ENCODE measurements at regions of chr20 and their contacts with region 1.

Region 1: DNA sequence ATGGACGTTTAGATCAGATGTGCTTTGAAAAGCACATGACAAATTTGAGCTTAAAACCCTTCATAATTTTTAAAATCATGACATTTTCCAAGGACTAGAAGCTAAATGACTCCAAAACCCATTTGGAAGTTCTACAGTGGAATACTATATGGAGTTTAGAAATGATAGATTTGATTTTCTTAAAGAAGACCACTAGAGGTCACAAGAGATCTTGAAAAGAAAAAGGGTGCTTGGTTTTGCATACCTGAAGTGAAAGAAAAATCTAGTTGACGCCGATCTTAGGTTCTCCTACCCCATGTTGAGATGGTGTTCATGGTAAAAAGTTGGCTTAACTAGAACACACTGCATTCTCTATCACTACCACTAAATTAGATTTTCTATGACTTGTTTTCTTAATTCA is 31.5 kb downstream of the CFAP61 start:
- DNase-seq: peak; percentile 18
- ATAC-seq: peak; percentile 84
- H3K4me3 ChIP-seq: no peak overlapping the region
- H3K27ac ChIP-seq: no peak overlapping the region
- H3K4me1 ChIP-seq: no peaks in the 10 kb centered on the region; the same call in 1 of the 2 replicates
- H3K27me3 ChIP-seq: peaks cover 11% of the 10 kb centered on the region
- CTCF ChIP-seq: peak; percentile 63; the same call in 1 of the 2 replicates

Region 2: GRCh38 chr20:19964289-19965263 is 119.2 kb before region 1 on chr20:
- CTCF ChIA-PET with region 1: no interaction called
- POLR2A ChIA-PET with region 1: no interaction called
- in situ Hi-C with region 1: no loop called
- intact Hi-C with region 1: no loop called
- DNase-seq: no peak
- ATAC-seq: peak; percentile 90
- H3K4me3 ChIP-seq: no peak overlapping the region
- H3K27ac ChIP-seq: peak overlapping the region; percentile 41
- H3K4me1 ChIP-seq: peaks cover 4% of the 10 kb centered on the region
- H3K27me3 ChIP-seq: no peaks in the 10 kb centered on the region
- CTCF ChIP-seq: no peak

Region 3: GRCh38 chr20:19995220-19995863 is 88.5 kb before region 1 on chr20:
- CTCF ChIA-PET with region 1: no interaction called
- POLR2A ChIA-PET with region 1: no interaction called
- in situ Hi-C with region 1: no loop called
- intact Hi-C with region 1: no loop called
- DNase-seq: no peak
- ATAC-seq: no peak
- H3K4me3 ChIP-seq: no peak overlapping the region
- H3K27ac ChIP-seq: peak overlapping the region; percentile 99
- H3K4me1 ChIP-seq: peaks cover 57% of the 10 kb centered on the region
- H3K27me3 ChIP-seq: no peaks in the 10 kb centered on the region
- CTCF ChIP-seq: peak; percentile 82; the same call in 1 of the 2 replicates

Region 4: DNA sequence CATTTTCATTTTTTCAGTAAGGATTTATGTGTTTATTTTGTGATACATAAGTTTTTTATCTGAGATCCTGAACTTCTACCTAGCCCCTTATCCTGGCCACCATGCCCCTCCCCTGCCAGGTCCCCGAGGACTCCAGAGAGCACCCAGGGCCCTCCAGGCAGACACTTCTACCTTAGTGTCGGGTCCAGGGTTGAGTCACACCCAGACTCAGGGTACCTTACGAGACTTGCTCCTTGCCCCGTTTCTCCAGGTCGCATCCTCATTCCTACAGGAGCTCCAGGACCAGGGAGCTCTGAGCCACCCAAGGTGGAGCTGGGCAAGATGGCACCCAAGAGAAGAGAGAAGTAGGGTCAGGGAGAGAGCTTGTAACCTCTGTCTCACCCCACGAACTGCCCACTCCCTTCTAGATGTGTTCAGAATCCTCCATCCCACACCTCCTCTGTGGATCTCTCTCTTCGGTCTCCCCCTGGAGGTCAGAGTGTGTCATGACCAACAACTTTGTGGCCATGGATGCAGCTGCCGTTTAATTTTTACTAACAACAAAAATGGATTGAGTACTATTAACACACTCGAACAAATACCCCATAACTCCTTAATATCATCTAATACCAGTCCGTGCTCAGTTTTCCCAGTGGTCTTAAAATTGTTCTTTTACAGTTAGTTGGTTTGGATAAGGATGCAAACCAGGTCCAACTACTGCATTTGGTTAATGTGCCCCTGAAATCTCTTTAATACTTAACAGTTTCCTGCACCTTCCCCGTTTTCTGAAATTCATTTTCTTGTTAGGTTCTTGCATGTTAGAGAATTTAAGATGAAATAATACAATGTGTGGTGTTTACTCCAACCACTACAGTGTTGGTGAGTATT is 153.5 kb after region 1 on chr20:
- CTCF ChIA-PET with region 1: no interaction called
- POLR2A ChIA-PET with region 1: no interaction called
- in situ Hi-C with region 1: no loop called
- intact Hi-C with region 1: loop called (anchors 5 kb)
- DNase-seq: peak; percentile 24
- ATAC-seq: peak; percentile 76
- H3K4me3 ChIP-seq: no peak overlapping the region
- H3K27ac ChIP-seq: no peak overlapping the region
- H3K4me1 ChIP-seq: no peaks in the 10 kb centered on the region
- H3K27me3 ChIP-seq: peaks cover 5% of the 10 kb centered on the region; the same call in 1 of the 2 replicates
- CTCF ChIP-seq: peak; percentile 81

Region 5: DNA sequence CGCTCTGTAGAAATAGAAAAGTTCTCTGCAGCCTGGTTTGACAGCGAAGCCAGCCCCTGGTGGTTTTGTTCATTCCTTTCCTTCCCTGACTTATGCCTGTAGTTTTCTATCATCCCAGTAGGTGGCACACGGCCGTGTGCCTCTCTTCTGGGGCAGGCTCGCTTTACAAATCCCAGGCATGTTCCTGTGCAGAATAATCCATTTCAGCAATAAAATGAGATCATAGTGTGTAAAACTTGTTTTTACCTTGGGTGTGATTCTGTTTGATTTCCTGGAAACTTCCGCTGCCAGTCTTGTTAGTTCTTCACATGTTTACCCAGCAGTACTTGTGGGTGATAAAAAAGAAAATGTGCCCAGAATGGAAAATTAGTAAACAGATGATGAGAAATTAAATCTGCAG is 276.7 kb after region 1 on chr20:
- CTCF ChIA-PET with region 1: no interaction called
- POLR2A ChIA-PET with region 1: no interaction called
- in situ Hi-C with region 1: no loop called
- intact Hi-C with region 1: loop called (anchors 10 kb)
- DNase-seq: peak; percentile 39
- ATAC-seq: peak; percentile 91
- H3K4me3 ChIP-seq: no peak overlapping the region
- H3K27ac ChIP-seq: no peak overlapping the region
- H3K4me1 ChIP-seq: no peaks in the 10 kb centered on the region
- H3K27me3 ChIP-seq: peaks cover 32% of the 10 kb centered on the region
- CTCF ChIP-seq: peak; percentile 92

Region 6: DNA sequence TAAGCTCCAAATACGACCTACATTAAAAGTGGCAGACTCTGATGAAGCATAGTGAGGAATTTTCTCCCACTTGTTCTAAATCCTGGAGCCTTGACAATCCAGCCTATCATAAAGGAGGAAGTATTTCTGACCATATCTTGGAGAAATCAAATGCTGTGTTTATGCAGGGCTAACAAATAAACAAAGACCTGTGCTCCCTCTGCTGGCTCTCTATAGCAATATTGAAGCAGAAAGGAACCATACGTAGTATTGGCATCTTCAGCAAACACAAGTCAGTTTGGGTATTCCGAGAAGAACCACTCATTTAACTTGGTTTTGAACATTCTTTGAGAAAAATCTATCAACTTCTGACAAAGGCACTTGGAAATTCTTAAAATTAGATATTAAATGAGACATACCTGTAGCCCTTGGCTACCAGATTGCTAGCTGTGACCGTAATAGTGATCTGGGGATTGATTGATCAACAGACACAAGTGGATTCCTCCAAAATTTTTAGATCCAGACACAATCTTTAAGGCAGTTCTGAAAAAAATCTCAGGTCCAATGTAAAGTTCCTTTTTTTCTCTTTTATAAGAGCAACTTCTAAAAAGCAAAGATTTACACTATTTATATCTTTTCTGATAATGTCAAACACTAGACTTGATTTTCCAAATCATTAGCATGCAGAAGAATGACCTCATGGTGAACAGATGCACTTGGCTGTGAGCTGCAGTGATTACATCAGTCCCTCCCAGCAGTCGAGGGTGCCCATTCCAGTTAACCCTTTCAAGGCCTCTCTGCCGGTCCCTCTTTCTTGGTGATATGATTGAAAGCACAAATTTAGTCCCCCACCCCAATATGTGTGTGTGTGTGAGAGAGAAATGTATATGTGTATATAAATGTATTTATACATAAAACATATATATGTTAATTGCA is 324.3 kb after region 1 on chr20:
- CTCF ChIA-PET with region 1: no interaction called
- POLR2A ChIA-PET with region 1: no interaction called
- in situ Hi-C with region 1: no loop called
- intact Hi-C with region 1: loop called (anchors 5 kb)
- DNase-seq: peak; percentile 18
- ATAC-seq: peak; percentile 80; the same call in 1 of the 2 replicates
- H3K4me3 ChIP-seq: no peak overlapping the region
- H3K27ac ChIP-seq: no peak overlapping the region
- H3K4me1 ChIP-seq: no peaks in the 10 kb centered on the region
- H3K27me3 ChIP-seq: no peaks in the 10 kb centered on the region
- CTCF ChIP-seq: peak; percentile 57

Region 7: GRCh38 chr20:20568604-20569205 is 484.9 kb after region 1 on chr20:
- CTCF ChIA-PET with region 1: no interaction called
- POLR2A ChIA-PET with region 1: no interaction called
- in situ Hi-C with region 1: no loop called
- intact Hi-C with region 1: loop called (anchors 2 kb)
- DNase-seq: peak; percentile 25
- ATAC-seq: no peak
- H3K4me3 ChIP-seq: no peak overlapping the region
- H3K27ac ChIP-seq: no peak overlapping the region
- H3K4me1 ChIP-seq: no peaks in the 10 kb centered on the region
- H3K27me3 ChIP-seq: no peaks in the 10 kb centered on the region
- CTCF ChIP-seq: peak; percentile 79; the same call in 1 of the 2 replicates

Region 8: DNA sequence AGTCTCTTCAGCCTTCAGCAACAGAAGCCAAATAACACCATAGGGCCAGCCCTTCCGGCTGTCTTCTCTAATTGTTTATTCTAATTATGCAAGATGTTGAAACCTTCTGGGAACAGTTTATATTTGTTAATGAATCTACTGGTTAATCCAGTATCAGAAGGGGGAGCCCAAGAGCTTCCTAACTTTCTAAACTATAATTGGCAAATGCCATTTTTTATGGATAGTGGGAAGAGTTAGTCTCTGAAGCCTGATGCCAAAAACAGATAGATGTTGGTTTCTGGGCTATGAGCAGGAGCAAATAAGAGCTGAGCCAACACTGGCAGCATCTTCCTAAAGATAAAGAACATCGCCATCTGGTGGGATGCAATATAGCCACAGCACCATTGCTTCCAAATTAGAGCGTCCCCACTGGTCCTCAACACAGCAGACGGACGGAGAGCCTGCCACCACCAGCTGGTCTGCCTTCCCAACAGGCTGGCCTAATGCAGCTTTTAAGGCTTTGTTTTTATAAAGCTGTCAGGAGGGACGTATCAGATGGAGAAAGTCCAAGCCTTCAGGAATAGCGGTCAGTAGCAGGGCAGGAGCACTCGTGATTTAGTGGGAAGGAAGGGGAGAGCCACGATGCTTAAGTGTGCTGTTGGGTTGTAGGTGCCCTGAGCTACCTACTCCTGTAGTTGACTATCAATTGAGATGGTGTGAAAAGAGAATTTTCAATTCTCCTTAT is 509.8 kb after region 1 on chr20:
- CTCF ChIA-PET with region 1: no interaction called
- POLR2A ChIA-PET with region 1: no interaction called
- in situ Hi-C with region 1: no loop called
- intact Hi-C with region 1: loop called (anchors 10 kb)
- DNase-seq: peak; percentile 17
- ATAC-seq: peak; percentile 87
- H3K4me3 ChIP-seq: no peak overlapping the region
- H3K27ac ChIP-seq: no peak overlapping the region
- H3K4me1 ChIP-seq: no peaks in the 10 kb centered on the region
- H3K27me3 ChIP-seq: no peaks in the 10 kb centered on the region
- CTCF ChIP-seq: peak; percentile 85

Measured in Panc1 (cell line).